ENCODE measurements at regions of chr7 and their contacts with region 1.

Region 1: DNA sequence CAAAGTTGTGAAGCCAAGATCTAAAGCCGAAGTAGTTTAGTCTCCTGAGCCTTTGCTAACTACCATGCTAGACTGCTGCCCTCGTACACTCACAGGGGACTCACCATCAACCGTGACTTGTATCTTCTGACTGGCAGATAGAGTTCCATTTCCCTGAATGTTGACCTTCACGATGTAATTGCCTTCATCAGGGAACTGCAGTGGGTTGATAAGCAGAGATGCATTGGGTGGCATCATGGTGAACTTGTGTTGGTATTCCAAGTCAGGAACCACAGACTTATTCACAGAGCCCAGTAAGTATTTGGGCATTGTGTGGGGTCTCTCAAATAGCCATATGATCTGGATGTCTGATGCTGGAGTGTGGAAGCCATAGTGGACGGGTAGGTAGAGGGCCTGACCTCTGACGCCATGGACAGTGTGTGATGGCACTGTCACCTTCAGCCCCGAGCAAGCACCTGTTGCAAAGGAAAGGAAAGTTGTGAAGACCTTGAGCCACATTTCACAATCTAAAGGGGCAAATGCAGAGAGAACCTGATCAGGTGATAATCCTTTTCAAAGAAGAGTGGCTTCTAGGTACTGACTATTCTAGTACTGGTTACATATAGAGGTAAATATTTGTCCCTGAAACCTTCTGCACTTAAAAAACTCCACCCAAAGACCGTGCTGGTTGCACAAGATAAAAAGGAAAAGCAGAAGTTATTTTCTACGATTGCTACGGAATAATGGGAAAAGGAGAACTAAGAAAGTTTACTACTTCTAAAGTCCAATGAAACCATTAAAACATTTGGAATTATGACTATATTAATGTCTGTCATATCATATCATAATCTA is 7.1 kb downstream of the HEPACAM2 start:
- DNase-seq: no peak
- CTCF ChIP-seq: no peak

Region 2: DNA sequence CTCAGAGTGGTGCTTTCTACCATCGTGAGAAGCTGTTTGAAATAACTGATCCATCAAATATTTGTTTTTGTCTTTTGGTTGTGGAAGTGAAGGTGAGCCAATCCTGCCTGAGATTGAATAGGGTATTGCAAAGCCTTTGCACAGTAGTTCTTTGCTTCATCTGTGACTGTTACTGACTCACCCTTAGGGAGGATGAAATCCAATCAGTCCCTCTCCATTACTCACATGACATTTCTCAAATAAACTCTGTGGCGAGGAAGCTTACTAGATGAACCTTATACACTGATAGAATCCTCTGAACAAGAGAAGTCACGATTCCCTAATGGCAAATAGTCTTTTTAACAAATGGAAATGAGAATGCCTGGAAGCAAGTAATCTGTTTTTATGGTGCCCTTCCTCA is 24.8 kb before region 1 on chr7:
- CTCF ChIA-PET with region 1: no interaction called
- POLR2A ChIA-PET with region 1: no interaction called
- DNase-seq: no peak
- CTCF ChIP-seq: no peak

Region 3: GRCh38 chr7:93231799-93232672 is 12.8 kb after region 1 on chr7 and contains the start of gene VPS50:
- CTCF ChIA-PET with region 1: interaction called, 20 read pairs
- POLR2A ChIA-PET with region 1: no interaction called
- DNase-seq: peak; percentile 91
- CTCF ChIP-seq: no peak

Measured in GM10248 (cell line).